ENCODE measurements at regions of chr2 and their contacts with region 1.

Region 1: DNA sequence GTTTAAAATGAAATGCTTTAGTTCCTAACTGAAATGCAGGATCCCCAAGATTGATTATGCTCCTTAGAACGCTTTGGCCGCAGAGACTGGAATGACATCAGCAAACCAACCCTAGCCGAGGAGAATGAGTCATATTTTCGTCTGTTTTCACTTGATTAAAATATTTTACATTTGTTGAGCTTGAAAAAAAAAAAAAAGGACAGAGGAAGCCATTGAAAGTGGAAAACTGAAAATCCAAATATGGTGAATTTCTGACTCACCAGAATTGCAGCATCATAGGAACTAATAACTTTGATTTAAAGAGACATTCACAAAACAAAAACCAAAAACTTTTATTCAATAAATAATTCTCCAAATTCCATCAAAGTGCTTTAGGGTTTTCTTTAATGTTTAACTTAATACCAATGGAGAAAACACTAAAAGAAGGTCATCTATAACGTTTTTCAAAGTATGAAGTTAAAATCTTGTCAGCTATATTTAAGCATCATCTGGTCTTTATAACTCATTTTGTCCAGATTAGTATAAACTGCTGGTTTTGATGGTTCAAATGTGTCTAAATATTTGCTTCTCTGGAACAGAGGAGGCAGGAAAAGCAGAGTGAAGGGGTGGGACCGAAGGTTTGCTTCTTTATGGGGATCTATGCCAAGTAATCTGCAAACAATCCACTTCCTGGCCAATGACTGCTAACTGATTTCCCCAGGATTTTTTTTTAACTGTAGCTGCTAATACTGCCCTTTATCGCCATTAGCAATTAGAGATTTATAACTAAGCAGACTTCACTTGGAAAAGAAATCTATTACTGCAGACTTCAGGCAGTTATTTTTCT is 30.9 kb upstream of the COL5A2 start:
- DNase-seq: peak; percentile 98
- ATAC-seq: peak; percentile 73
- H3K4me3 ChIP-seq: peak overlapping the region; percentile 5; the same call in 1 of the 2 replicates
- H3K27ac ChIP-seq: peak overlapping the region; percentile 96
- H3K4me1 ChIP-seq: peaks cover 14% of the 10 kb centered on the region
- H3K27me3 ChIP-seq: no peaks in the 10 kb centered on the region
- CTCF ChIP-seq: no peak
- POLR2A ChIP-seq: no peak
- RAD21 ChIP-seq: no peak

Region 2: GRCh38 chr2:188725746-188726360 is 484.6 kb before region 1 on chr2:
- CTCF ChIA-PET with region 1: no interaction called
- POLR2A ChIA-PET with region 1: no interaction called
- dilution Hi-C with region 1: no loop called
- in situ Hi-C with region 1: no loop called
- intact Hi-C with region 1: no loop called
- DNase-seq: peak; percentile 73
- ATAC-seq: 0 out of 2 replicates have a peak, but pooled peaks have one; percentile 42
- H3K4me3 ChIP-seq: no peak overlapping the region
- H3K27ac ChIP-seq: no peak overlapping the region
- H3K4me1 ChIP-seq: no peaks in the 10 kb centered on the region
- H3K27me3 ChIP-seq: no peaks in the 10 kb centered on the region
- CTCF ChIP-seq: no peak
- POLR2A ChIP-seq: no peak
- RAD21 ChIP-seq: no peak

Region 3: GRCh38 chr2:189252991-189253675 is 42.7 kb after region 1 on chr2:
- CTCF ChIA-PET with region 1: no interaction called
- POLR2A ChIA-PET with region 1: interaction called, 6 read pairs
- dilution Hi-C with region 1: no loop called
- in situ Hi-C with region 1: no loop called
- intact Hi-C with region 1: loop called (anchors 1 kb)
- DNase-seq: no peak
- ATAC-seq: no peak
- H3K4me3 ChIP-seq: no peak overlapping the region
- H3K27ac ChIP-seq: no peak overlapping the region
- H3K4me1 ChIP-seq: peaks cover 13% of the 10 kb centered on the region
- H3K27me3 ChIP-seq: no peaks in the 10 kb centered on the region
- CTCF ChIP-seq: no peak
- POLR2A ChIP-seq: no peak
- RAD21 ChIP-seq: no peak

Region 4: DNA sequence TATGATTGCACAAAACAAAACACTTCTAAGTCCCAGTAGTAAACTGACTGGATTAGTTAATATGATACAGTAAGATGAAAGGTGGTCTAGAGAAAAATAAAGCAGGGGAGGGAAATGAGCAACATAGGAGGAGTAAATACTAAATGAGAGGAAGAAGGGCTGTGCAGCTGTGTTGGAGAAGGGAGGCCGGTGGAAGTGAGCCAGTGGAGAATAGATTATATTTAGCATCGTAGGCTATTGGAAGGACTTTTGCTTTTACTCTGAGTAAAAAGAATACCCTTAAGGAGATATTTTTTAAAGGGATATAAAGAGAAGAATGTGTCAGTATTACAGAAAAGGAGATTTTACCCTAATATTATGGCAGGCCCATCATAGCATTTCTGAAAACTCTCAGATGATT is 243.5 kb after region 1 on chr2:
- CTCF ChIA-PET with region 1: no interaction called
- POLR2A ChIA-PET with region 1: no interaction called
- dilution Hi-C with region 1: no loop called
- in situ Hi-C with region 1: no loop called
- intact Hi-C with region 1: no loop called
- DNase-seq: no peak
- ATAC-seq: no peak
- H3K4me3 ChIP-seq: no peak overlapping the region
- H3K27ac ChIP-seq: no peak overlapping the region
- H3K4me1 ChIP-seq: no peaks in the 10 kb centered on the region
- H3K27me3 ChIP-seq: no peaks in the 10 kb centered on the region
- CTCF ChIP-seq: no peak
- POLR2A ChIP-seq: no peak
- RAD21 ChIP-seq: no peak